PC-3 (cell line): ENCODE measurements at regions of chr14 and their contacts with region 1.

Region 1: DNA sequence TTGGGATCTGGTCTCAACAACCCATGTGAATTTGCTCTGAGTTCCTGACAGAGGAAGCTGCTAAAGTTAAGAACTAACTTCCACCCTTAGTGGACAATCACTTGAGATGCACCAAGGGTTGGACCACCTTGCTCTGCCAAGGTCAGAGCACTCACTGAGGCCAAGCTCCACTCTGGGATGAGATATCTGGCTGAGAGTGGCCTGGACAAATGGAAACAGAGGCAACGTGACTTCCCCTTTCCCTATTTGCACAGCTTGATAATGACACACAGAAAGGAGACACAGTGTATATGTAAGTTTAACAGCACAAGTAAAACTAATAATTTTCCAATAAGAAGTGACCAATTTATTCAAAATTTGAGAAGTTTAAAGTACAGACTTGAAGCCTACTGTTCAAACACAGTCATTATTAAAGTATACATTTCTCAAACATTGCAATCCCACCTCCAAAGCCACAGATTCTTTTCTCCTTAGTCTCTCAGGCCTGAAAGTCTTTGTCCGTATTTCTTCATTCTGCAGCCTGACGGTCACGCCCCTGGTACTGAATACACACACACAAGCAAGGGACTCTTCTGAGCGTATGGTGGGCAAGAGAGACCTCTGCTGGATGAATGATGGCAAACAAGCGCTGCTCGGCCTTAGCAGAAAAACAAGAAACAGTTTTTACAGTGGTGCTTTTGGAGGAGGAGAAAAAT is 28.6 kb downstream of the TMEM30B start:
- DNase-seq: peak; percentile 98
- ATAC-seq: peak; percentile 93
- H3K4me3 ChIP-seq: 0 out of 2 replicates have a peak overlapping the region, but pooled peaks have one; percentile 5
- H3K27ac ChIP-seq: peak overlapping the region; percentile 80
- H3K4me1 ChIP-seq: peaks cover 27% of the 10 kb centered on the region
- H3K27me3 ChIP-seq: no peaks in the 10 kb centered on the region
- CTCF ChIP-seq: peak; percentile 99

Region 2: DNA sequence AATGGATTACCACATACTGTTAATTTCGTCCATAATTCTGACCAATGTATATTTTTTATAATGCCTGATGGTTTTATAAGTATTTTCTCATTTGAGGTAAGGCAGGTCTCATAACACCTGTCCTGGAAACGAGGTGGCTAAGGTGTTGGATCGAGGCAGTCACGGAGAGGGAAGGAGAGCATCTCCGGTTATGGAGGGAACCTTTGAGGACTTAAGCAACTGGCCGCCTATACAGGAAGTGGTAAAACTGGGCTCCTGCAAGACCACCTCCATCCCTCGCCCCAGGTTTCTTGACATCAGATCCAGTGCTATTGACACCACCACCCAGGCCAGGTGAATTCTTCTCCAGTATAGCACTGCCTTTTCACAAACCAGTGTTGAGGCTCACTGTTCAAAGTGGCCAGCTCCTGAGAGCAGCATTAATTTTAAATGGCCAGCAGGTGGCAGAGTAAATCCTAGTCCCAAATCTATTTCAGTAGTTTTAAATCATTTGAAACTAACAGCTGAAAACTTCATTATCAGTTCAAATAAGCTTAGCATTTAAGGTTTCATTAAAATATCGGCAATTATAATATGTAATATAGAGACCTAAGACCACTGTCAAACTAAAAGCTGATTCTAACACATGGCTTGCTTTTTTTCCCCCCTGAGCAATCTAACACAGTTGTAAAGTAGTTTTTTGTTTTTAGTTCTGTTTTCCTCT is 902.7 kb before region 1 on chr14:
- CTCF ChIA-PET with region 1: interaction called, 10 read pairs
- POLR2A ChIA-PET with region 1: no interaction called
- intact Hi-C with region 1: loop called (anchors 1 kb)
- DNase-seq: peak; percentile 90
- ATAC-seq: peak; percentile 82
- H3K4me3 ChIP-seq: no peak overlapping the region
- H3K27ac ChIP-seq: no peak overlapping the region
- H3K4me1 ChIP-seq: no peaks in the 10 kb centered on the region
- H3K27me3 ChIP-seq: peaks cover 15% of the 10 kb centered on the region
- CTCF ChIP-seq: peak; percentile 99

Region 3: DNA sequence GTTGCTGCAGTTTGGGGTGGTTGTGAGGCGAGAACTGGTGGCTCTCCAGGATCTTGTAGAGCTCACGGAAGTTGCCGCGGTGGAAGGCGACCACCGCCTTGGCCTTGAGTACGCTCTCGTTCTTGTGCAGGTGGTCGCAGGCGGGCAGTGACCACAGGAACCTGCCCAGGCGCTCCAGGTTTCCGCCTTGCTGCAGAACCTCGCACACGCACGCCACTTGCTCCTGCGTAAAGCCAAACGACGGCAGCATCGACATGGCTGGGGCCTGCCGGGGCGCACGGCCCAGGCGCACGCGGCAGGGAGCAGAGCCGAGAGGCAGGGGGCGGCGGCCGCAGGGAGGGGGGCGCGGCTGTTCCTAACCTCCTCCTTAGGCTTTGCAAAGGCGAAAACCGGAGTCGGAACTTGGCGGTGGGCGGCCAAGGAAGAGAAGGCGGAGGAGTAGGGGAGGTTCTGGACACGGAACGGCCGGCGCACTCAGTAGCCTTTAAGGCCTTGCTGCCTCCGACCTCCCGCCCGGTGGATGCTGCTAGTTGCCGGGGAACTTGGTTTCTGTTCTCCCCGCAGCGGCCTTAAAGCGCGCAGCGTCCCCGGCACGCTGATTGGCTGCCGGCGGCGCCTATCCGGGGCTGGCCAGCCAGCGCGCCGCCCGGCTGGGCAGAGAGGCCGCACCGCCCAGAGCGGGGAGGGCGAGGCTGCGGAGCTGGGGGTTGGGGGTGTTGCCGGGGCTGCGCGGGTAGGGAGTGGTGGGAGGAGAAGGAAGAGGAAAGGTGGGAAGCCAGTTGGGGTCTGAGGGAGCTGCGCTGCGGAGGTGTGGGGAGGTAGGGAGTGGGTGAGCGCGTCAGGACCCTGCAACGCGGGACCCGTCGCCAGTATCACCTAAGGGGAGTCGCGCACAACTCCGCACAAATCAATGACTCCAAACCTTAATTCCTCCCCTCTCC is 603.3 kb before region 1 on chr14 and contains the start of gene SIX1:
- CTCF ChIA-PET with region 1: no interaction called
- POLR2A ChIA-PET with region 1: interaction called, 5 read pairs
- intact Hi-C with region 1: loop called (anchors 2 kb)
- DNase-seq: peak; percentile 97
- ATAC-seq: peak; percentile 78
- H3K4me3 ChIP-seq: peak within 1 kb of the TSS; percentile 75
- H3K27ac ChIP-seq: 0 out of 2 replicates have a peak within 1 kb of the TSS, but pooled peaks have one; percentile 6
- H3K4me1 ChIP-seq: peaks cover 21% of the 10 kb centered on the region
- H3K27me3 ChIP-seq: no peaks in the 10 kb centered on the region
- CTCF ChIP-seq: no peak
- total RNA-seq, gene SIX1: 16.5 and 18.2 TPM in 2 replicates

Region 4: GRCh38 chr14:60805841-60806569 is 446.5 kb before region 1 on chr14:
- CTCF ChIA-PET with region 1: no interaction called
- POLR2A ChIA-PET with region 1: no interaction called
- intact Hi-C with region 1: loop called (anchors 2 kb)
- DNase-seq: peak; percentile 93
- ATAC-seq: peak; percentile 87
- H3K4me3 ChIP-seq: no peak overlapping the region
- H3K27ac ChIP-seq: peak overlapping the region; percentile 51
- H3K4me1 ChIP-seq: peaks cover 36% of the 10 kb centered on the region
- H3K27me3 ChIP-seq: no peaks in the 10 kb centered on the region
- CTCF ChIP-seq: no peak

Region 5: GRCh38 chr14:61076556-61076955 is 176.0 kb before region 1 on chr14:
- CTCF ChIA-PET with region 1: interaction called, 3 read pairs
- POLR2A ChIA-PET with region 1: no interaction called
- intact Hi-C with region 1: loop called (anchors 2 kb)
- DNase-seq: no peak
- ATAC-seq: peak; percentile 4; the same call in 1 of the 2 replicates
- H3K4me3 ChIP-seq: no peak overlapping the region
- H3K27ac ChIP-seq: peak overlapping the region; percentile 82
- H3K4me1 ChIP-seq: peaks cover 33% of the 10 kb centered on the region
- H3K27me3 ChIP-seq: no peaks in the 10 kb centered on the region
- CTCF ChIP-seq: no peak

Region 6: DNA sequence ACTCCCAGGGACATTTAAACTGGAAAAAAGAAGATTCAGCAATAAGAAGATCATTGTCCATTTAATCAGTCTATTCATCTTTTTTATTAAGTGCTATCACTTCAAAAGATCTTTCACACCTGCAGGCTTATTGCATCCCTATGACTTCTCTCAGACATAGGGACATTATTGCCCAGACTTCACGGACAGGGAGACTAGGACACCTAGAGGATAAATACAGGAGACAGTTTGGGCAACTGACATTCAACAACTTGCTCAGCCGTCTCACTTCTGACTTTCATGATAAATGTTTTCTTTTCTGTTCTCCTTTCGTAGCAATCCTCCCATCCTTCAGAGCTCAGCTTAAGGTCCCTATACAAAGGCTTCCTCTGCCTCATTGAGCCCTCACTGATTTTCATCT is 55.7 kb before region 1 on chr14:
- CTCF ChIA-PET with region 1: interaction called, 3 read pairs
- POLR2A ChIA-PET with region 1: no interaction called
- intact Hi-C with region 1: loop called (anchors 1 kb)
- DNase-seq: peak; percentile 66
- ATAC-seq: peak; percentile 95
- H3K4me3 ChIP-seq: no peak overlapping the region
- H3K27ac ChIP-seq: no peak overlapping the region
- H3K4me1 ChIP-seq: no peaks in the 10 kb centered on the region
- H3K27me3 ChIP-seq: no peaks in the 10 kb centered on the region
- CTCF ChIP-seq: peak; percentile 76

Region 7: DNA sequence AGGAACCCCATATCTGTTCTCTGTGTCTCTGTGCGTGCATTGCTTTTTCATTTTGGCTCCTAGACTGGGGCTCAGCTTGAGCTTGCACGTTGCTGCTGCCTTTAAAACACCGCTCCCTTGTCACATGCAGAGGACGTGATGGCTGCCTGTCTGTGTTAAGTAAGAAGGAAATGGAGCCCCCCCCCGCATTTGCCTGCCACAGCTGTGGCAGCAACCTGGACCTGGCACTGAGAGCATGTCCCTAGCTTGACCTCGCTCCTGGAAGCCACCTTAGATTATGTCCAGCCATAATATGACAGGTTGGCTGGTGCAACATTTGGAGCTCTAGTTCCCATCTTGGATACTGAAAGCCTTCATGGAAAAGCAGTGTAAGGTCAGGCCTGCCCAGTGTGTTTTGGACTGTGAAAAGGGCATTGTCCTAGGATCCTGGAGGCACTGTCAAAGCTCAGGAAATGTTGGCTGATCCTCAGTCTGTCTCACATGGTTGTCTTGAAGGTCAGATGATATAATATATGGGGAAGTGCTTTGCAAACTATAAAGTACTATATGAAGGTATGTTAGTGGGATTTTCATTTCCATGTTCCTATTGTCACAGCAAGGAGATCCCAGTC is 142.7 kb after region 1 on chr14:
- CTCF ChIA-PET with region 1: no interaction called
- POLR2A ChIA-PET with region 1: interaction called, 17 read pairs
- intact Hi-C with region 1: no loop called
- DNase-seq: no peak
- ATAC-seq: no peak
- H3K4me3 ChIP-seq: no peak overlapping the region
- H3K27ac ChIP-seq: no peak overlapping the region
- H3K4me1 ChIP-seq: no peaks in the 10 kb centered on the region
- H3K27me3 ChIP-seq: no peaks in the 10 kb centered on the region
- CTCF ChIP-seq: no peak